Left colon (tissue), 2 donors: ENCODE measurements at regions of chr14 and their contacts with region 1.

Region 1: DNA sequence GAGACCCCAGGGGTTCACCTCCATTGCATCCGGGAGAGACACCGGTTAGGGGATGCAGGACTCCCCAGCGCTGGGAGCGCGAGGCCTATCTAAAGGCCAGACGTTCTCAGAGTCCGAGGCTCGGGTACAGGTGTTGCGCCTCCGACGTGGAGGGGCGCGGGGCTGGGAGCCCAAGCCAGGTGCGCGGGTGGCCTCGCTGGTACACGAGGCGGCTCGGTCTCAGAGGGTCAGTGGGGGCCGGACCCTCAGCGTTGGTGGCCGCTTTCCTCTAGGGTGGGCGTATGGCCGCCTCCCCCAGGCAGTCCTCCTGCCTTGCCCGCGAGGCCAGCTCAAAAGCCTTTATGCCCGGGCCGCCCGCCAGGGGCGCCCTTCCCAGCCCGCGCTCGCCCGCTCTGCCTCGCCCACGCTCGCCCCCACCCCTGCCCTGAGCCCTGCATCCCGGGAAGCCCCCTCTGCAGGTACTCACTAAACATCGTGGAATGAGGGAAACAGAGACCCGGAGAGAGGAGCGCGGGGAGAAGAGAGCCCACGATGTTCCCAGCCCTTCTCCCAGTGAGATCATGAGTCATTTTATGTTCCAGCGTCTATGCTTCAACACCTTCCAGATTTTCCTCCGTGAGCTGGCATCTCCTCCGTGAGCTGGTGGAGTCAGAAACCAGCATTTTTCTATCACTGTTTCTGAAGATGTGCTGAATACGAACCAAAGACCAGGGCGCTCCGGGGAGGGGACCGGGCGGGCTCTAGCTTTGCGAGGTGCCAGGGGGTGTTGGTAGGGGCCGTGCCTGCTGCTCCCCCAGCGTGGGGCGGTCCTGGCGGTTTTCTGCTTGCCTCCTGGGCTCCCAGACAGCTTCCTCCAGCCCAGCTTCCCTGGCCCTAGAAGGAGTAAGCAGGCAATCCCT is 73.8 kb downstream of the DIO3 start:
- DNase-seq: no peak
- ATAC-seq: no peak

Region 2: GRCh38 chr14:100850841-100851585 is 784.1 kb before region 1 on chr14:
- intact Hi-C with region 1: loop called in 1 of 2 experiments (anchors 5 kb)
- DNase-seq: peak; percentile 80 to 94
- ATAC-seq: peak; percentile 99

Region 3: GRCh38 chr14:101554991-101555668 is 80.0 kb before region 1 on chr14:
- intact Hi-C with region 1: no loop called
- DNase-seq: peak; percentile 69 to 71
- ATAC-seq: peak; percentile 85